ENCODE measurements at regions of chr14 and their contacts with region 1.

Region 1: GRCh38 chr14:92793709-92794546 is at the start of gene GOLGA5:
- DNase-seq: peak; percentile 99
- ATAC-seq: peak; percentile 92
- H3K4me3 Mint-ChIP-seq: peak within 1 kb of the TSS; percentile 95
- H3K27ac Mint-ChIP-seq: peak within 1 kb of the TSS; percentile 85
- H3K4me1 Mint-ChIP-seq: peaks cover 33% of the 10 kb centered on the region
- H3K27me3 Mint-ChIP-seq: no peaks in the 10 kb centered on the region
- CTCF ChIP-seq: no peak
- total RNA-seq, gene GOLGA5: 16.6 and 18.0 TPM in 2 replicates

Region 2: DNA sequence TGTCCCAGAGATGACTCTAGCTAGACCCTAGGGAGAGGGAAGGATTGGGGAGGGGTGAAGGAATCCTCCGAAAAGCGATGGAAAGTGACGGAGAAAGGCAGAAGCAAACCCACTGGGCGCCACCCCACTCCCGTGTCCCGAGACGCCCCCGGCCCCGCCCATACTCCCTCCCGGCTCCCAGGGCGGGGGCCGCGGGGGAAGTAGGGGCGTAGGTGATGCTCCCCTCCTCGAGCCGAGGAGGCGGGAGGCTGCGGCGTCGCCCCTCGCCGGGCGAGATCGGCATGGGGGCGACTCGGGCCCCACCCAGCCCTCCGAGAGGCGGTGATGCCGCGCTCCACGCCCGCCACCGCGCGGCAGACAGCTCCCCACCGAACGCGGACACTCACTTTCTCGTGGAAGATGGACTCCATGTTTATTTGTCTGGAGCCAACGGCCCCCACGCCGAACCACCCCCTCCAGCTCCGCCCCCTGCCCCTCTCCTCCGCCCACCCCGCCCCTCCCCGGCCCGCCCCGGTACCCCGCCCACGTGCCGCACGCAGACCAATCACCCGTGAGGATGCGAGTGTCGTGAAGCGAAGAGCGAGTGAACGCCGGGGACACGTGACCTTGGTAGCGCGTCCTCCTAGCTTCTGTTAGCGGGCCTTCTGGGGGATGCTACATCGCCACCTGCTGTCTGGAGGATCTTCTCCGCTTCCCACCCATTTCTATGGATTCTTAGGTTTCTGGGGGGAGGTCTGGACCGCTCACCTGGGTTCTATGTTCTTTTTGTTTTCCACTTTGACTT is 687.6 kb before region 1 on chr14 and contains the start of gene ATXN3:
- CTCF ChIA-PET with region 1: no interaction called
- POLR2A ChIA-PET with region 1: no interaction called
- intact Hi-C with region 1: loop called (anchors 1 kb)
- DNase-seq: peak; percentile 81
- ATAC-seq: peak; percentile 91
- H3K4me3 Mint-ChIP-seq: peak within 1 kb of the TSS; percentile 100
- H3K27ac Mint-ChIP-seq: peak within 1 kb of the TSS; percentile 92
- H3K4me1 Mint-ChIP-seq: peaks cover 46% of the 10 kb centered on the region
- H3K27me3 Mint-ChIP-seq: no peaks in the 10 kb centered on the region
- CTCF ChIP-seq: no peak
- total RNA-seq, gene ATXN3: 23.8 and 29.3 TPM in 2 replicates

Region 3: GRCh38 chr14:92603309-92604242 is 190.4 kb before region 1 on chr14:
- CTCF ChIA-PET with region 1: no interaction called
- POLR2A ChIA-PET with region 1: no interaction called
- intact Hi-C with region 1: loop called (anchors 5 kb)
- DNase-seq: no peak
- ATAC-seq: peak; percentile 61
- H3K4me3 Mint-ChIP-seq: no peak overlapping the region
- H3K27ac Mint-ChIP-seq: no peak overlapping the region
- H3K4me1 Mint-ChIP-seq: peaks cover 24% of the 10 kb centered on the region
- H3K27me3 Mint-ChIP-seq: no peaks in the 10 kb centered on the region
- CTCF ChIP-seq: no peak

Region 4: DNA sequence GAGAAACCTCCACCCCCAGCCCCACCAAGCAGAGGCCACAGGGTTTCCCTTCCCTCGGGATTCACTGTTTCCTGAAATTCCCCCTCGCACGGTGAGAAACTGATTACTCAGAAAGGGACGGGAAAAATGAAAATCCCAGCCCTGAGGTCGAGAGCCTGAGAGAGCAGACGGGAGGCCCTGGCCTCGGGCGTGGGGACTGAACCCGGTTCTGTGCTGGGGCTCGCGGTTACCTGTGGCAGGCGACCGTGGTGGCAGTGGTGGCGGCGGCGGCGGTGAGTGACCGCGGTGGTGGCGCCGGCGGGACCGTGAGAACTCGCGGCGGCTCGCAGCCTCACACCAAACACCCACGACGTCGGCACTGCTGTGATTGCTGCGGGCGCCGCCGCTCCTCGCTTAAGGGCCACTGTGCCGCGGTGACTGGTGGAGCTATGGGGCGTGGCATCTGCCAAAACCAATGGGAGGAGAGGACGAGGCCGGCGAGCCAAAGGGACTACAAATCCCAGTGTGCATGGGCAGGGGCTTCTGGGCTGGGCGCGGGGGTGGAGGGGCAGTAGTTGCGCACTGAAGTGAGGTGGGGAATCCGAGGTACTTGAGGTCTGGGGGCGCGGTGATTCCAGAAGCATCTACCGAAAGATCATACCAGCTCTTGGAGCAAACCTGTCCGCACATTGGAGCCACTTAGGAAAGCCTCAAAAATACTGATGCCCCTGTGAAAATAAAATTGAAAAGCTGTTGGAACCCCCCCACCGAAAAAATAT is 45.5 kb before region 1 on chr14 and contains the start of gene LGMN:
- CTCF ChIA-PET with region 1: no interaction called
- POLR2A ChIA-PET with region 1: interaction called, 3 read pairs
- intact Hi-C with region 1: loop called (anchors 1 kb)
- DNase-seq: peak; percentile 75
- ATAC-seq: peak; percentile 97
- H3K4me3 Mint-ChIP-seq: peak within 1 kb of the TSS; percentile 90
- H3K27ac Mint-ChIP-seq: peak within 1 kb of the TSS; percentile 82
- H3K4me1 Mint-ChIP-seq: peaks cover 77% of the 10 kb centered on the region
- H3K27me3 Mint-ChIP-seq: no peaks in the 10 kb centered on the region
- CTCF ChIP-seq: no peak
- total RNA-seq, gene LGMN: 10.3 and 11.8 TPM in 2 replicates

Region 5: DNA sequence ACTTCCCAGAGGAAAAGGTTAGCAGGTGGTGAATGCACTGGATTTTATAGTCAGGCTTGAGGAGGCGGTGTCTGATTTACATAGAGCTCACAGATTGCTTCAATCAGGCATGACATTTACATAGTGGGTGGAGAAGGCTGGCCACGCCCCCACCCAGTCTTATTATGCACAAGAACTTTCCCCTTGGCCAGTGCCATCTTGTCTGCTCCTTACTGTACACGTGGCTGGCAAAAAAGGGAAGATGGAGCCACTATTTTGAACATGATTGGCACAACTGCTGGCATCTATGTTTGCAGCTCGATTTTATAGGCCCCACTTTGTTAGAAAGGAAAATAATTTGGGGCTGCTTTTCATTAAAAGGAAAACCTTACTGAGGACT is 34.6 kb before region 1 on chr14:
- CTCF ChIA-PET with region 1: no interaction called
- POLR2A ChIA-PET with region 1: no interaction called
- intact Hi-C with region 1: no loop called
- DNase-seq: no peak
- ATAC-seq: no peak
- H3K4me3 Mint-ChIP-seq: no peak overlapping the region
- H3K27ac Mint-ChIP-seq: no peak overlapping the region
- H3K4me1 Mint-ChIP-seq: peaks cover 16% of the 10 kb centered on the region
- H3K27me3 Mint-ChIP-seq: no peaks in the 10 kb centered on the region
- CTCF ChIP-seq: no peak

Region 6: GRCh38 chr14:92832137-92832700 is 38.3 kb after region 1 on chr14:
- CTCF ChIA-PET with region 1: no interaction called
- POLR2A ChIA-PET with region 1: no interaction called
- intact Hi-C with region 1: no loop called
- DNase-seq: no peak
- ATAC-seq: no peak
- H3K4me3 Mint-ChIP-seq: no peak overlapping the region
- H3K27ac Mint-ChIP-seq: no peak overlapping the region
- H3K4me1 Mint-ChIP-seq: no peaks in the 10 kb centered on the region
- H3K27me3 Mint-ChIP-seq: no peaks in the 10 kb centered on the region
- CTCF ChIP-seq: no peak

Region 7: DNA sequence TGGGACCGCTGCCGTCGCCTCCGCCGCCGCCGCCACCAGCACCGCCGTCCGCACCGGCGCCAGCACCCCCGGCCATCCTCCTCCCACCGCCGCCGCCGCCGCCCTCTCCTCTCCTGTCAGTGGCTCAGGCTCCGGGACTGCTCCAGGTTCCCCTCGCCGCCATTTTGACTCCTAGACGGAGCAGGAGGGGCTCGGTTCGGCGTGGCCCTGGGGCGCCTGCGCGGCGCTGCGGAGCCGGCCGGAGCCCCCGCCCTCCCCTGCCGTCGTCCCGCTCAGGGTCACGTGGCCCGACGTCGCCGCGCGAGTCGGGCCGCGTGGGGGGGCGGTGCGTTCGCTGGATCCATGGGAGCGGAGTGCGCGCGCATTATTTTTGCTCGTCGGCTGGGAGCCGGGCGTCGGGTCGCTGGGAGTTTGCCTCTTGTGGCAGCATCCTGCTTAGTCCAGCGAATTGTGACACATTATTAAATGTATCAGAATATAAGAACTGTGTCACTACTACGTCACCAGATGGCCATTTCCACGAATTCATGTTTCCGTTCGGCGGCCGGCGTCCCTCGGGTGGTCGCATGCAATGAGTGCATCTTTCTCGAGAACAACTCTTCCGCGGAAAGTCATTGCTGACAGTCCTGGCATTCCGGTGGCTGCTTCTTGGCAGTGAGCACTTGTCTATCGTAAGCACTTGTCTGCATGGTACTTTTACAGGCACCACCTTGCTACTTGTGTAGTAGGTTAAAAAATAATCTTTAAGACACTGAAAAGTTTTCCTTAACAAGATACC is 539.1 kb after region 1 on chr14 and contains the start of gene BTBD7:
- CTCF ChIA-PET with region 1: no interaction called
- POLR2A ChIA-PET with region 1: no interaction called
- intact Hi-C with region 1: loop called (anchors 1 kb)
- DNase-seq: peak; percentile 94
- ATAC-seq: peak; percentile 91
- H3K4me3 Mint-ChIP-seq: peak within 1 kb of the TSS; percentile 95
- H3K27ac Mint-ChIP-seq: peak within 1 kb of the TSS; percentile 90
- H3K4me1 Mint-ChIP-seq: peaks cover 40% of the 10 kb centered on the region
- H3K27me3 Mint-ChIP-seq: no peaks in the 10 kb centered on the region
- CTCF ChIP-seq: no peak
- total RNA-seq, gene BTBD7: 34.4 and 41.2 TPM in 2 replicates

Measured in activated B cell treated with CpG ODN at 0.5 μM for 24 hours (primary cell).